ENCODE measurements at regions of chr9 and their contacts with region 1.

Region 1: DNA sequence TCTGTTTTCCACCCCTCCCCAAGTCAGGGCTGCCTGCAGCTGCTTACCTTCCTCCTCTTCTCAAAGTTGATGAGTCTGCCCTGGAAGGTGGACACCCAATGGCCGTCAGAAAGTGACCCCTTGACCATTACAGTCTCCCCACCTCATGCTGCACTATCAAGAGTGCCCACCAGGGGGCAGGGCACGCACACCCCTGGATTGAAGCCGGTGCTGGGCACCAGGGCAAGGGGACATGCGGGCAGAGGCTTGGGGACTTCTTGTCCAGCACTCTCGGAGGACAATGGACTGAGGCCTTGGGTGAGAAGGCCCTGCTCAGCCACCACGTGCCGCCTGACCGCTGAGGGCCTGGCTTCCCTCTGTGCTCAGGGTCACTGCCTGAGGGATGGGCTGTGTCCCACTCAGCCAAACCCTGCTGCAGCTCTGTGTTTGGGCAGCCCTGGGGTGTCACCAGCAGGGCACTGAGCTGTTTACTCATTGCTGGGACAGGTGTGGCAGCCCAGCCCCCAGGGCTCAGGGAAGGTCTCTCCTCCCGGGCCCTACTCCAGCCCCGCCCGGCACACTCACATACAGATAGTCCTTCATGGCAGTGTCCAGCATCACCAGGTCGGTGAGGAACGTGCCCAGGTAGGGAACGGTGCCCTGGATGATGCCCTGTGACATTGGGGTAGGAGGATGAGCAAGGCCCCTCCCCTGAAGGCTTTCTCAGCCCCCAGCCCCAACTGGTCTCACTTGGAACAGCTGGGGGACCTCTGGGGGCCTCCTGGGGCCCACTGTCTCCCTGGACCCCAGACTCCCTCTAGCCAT is 17.7 kb downstream of the RALGDS start:
- DNase-seq: no peak
- H3K4me3 ChIP-seq: no peak overlapping the region
- H3K27ac ChIP-seq: peak overlapping the region; percentile 57 to 61
- H3K4me1 ChIP-seq: no peaks in the 10 kb centered on the region
- H3K27me3 ChIP-seq: no peaks in the 10 kb centered on the region
- CTCF ChIP-seq: peak; percentile 96 to 99 (median 98)
- POLR2A ChIP-seq: no peak

Region 2: DNA sequence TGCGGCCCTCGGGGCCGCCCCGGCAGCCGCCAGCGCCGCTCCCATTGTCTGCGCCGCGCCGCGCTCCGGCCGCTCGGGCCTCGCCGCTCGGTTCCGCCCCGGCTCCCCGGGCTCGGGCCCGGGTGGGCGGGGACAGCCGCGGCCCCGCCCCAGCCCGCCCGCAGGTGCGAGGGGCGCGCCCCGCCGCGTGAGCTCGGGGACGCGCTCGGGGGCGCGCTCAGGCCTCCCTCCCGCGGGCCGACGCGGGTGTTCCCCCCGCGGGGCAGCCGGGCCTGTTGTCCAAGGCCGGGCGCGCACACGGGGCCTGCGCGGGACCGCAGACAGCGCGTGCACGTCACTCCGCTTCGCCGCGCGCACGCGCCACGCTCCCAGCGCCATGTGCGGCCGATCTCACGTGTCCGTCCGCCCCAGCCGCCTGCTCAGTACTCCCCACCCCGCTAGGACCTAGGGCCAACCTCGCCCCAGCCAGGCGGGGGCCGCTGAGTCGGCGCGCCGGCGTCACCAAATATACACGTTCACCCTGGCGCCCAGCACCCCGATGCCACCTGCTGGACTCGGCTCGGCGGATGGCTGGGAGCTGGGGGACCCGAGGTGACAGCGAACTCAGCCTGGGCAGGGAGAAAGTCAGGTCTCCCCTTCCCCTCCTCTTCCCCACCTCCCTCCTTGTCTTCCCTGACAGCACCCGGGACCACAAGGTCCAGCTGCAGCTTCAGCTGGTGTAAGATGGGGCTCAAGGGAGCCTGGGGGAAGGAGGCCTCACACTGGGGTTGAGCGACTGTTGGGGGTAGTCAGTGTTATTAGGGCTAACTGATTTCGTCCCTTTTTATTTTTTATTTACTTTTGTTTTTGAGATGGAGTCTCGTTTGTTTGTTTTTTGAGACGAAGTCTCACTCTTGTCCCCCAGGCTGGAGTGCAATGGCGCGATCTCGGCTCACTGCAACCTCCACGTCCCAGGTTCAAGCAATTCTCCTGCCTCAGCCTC is 46.0 kb after region 1 on chr9:
- intact Hi-C with region 1: loop called (anchors 2 kb)
- DNase-seq: peak; percentile 87 to 91
- H3K4me3 ChIP-seq: peak overlapping the region; percentile 60 to 91 (median 79)
- H3K27ac ChIP-seq: peak overlapping the region; percentile 95 to 98
- H3K4me1 ChIP-seq: peaks cover 3 to 18% of the 10 kb centered on the region in 2 donors
- H3K27me3 ChIP-seq: no peaks in the 10 kb centered on the region
- CTCF ChIP-seq: peak; percentile 22 to 65 (median 48)
- POLR2A ChIP-seq: peak; percentile 21